Heart left ventricle (tissue), 16 donors: ENCODE measurements at regions of chr2 and their contacts with region 1.

Region 1: GRCh38 chr2:28894470-28895177 is at the start of gene WDR43:
- DNase-seq: peak; percentile 97 to 99 (median 98)
- ATAC-seq: peak; percentile 98 to 100 (median 100)
- H3K4me3 ChIP-seq: peak within 1 kb of the TSS; percentile 66 to 100 (median 94)
- H3K27ac ChIP-seq: peak within 1 kb of the TSS; percentile 1 to 85 (median 73)
- H3K4me1 ChIP-seq: peaks cover 0 to 39% (median 26%) of the 10 kb centered on the region in 12 donors
- H3K27me3 ChIP-seq: no peaks in the 10 kb centered on the region
- CTCF ChIP-seq: no peak
- POLR2A ChIP-seq: peak in 1 of 2 donors; percentile 61
- total RNA-seq, gene WDR43: 14.4 to 35.9 (median 23.9) TPM

Region 2: GRCh38 chr2:28507806-28508764 is 386.5 kb before region 1 on chr2:
- intact Hi-C with region 1: no loop called
- DNase-seq: no peak
- ATAC-seq: peak in 1 of 4 donors; percentile 50
- H3K4me3 ChIP-seq: no peak overlapping the region
- H3K27ac ChIP-seq: no peak overlapping the region
- H3K4me1 ChIP-seq: peaks cover 0 to 5% (median 0%) of the 10 kb centered on the region in 12 donors
- H3K27me3 ChIP-seq: peaks cover 0 to under 1% (median 0%) of the 10 kb centered on the region in 9 donors
- CTCF ChIP-seq: no peak
- POLR2A ChIP-seq: no peak

Region 3: GRCh38 chr2:28870146-28870891 is 24.3 kb before region 1 on chr2 and contains the start of gene TRMT61B:
- intact Hi-C with region 1: loop called in 5 of 10 experiments (anchors 1 to 2 kb)
- DNase-seq: peak; percentile 96 to 98 (median 97)
- ATAC-seq: peak; percentile 100
- H3K4me3 ChIP-seq: peak within 1 kb of the TSS; percentile 73 to 99 (median 86)
- H3K27ac ChIP-seq: peak within 1 kb of the TSS in 11 of 12 donors; percentile 71 to 88 (median 78)
- H3K4me1 ChIP-seq: peaks cover 0 to 37% (median 20%) of the 10 kb centered on the region in 12 donors
- H3K27me3 ChIP-seq: no peaks in the 10 kb centered on the region
- CTCF ChIP-seq: peak in 1 of 12 donors; percentile 16
- POLR2A ChIP-seq: peak in 1 of 2 donors; percentile 70
- total RNA-seq, gene TRMT61B: 12.9 to 24.3 (median 15.9) TPM

Region 4: GRCh38 chr2:28934769-28935168 is 40.1 kb after region 1 on chr2:
- intact Hi-C with region 1: no loop called
- DNase-seq: no peak
- ATAC-seq: no peak
- H3K4me3 ChIP-seq: no peak overlapping the region
- H3K27ac ChIP-seq: no peak overlapping the region
- H3K4me1 ChIP-seq: no peaks in the 10 kb centered on the region
- H3K27me3 ChIP-seq: no peaks in the 10 kb centered on the region
- CTCF ChIP-seq: no peak
- POLR2A ChIP-seq: no peak

Region 5: DNA sequence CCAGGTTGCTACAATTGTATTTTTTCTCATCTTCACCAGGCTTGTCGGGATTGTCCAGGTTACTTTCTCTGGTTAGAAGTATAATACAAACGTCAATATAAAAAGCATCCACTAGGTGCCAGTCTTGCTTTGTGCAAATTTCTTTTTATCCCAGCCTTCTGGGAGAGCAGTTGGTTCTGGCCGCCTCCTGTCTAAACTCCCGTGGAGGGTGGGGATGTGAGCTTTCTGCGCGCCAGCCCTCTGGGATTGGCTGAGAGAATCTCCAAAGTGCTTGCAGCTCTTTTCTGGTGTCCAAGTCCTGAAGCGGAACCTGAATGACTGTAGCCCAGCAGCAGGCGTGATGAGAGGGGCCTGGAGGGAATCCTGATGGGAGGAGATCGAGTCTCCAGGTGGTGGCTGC is 64.1 kb after region 1 on chr2:
- intact Hi-C with region 1: no loop called
- DNase-seq: peak; percentile 47 to 74 (median 72)
- ATAC-seq: peak; percentile 82 to 93 (median 92)
- H3K4me3 ChIP-seq: no peak overlapping the region
- H3K27ac ChIP-seq: no peak overlapping the region
- H3K4me1 ChIP-seq: peaks cover 0 to 13% (median 3%) of the 10 kb centered on the region in 12 donors
- H3K27me3 ChIP-seq: no peaks in the 10 kb centered on the region
- CTCF ChIP-seq: peak; percentile 50 to 74 (median 64)
- POLR2A ChIP-seq: no peak